ENCODE measurements at regions of chr7 and their contacts with region 1.

Region 1: GRCh38 chr7:21427182-21427870 is 557 bp upstream of the SP4 start:
- DNase-seq: peak; percentile 98 to 100 (median 99)
- ATAC-seq: peak; percentile 85
- H3K4me3 ChIP-seq: peak overlapping the region; percentile 99
- H3K4me3 Mint-ChIP-seq: peak overlapping the region; percentile 94 to 99 (median 98)
- H3K27ac ChIP-seq: peak overlapping the region; percentile 99
- H3K27ac Mint-ChIP-seq: peak overlapping the region; percentile 94 to 100 (median 99)
- H3K4me1 ChIP-seq: peaks cover 37 to 41% of the 10 kb centered on the region in 2 donors
- H3K4me1 Mint-ChIP-seq: peaks cover 24 to 52% (median 52%) of the 10 kb centered on the region in 7 donors
- H3K27me3 ChIP-seq: no peaks in the 10 kb centered on the region
- H3K27me3 Mint-ChIP-seq: no peaks in the 10 kb centered on the region

Region 2: GRCh38 chr7:21338728-21339164 is 88.6 kb before region 1 on chr7:
- CTCF ChIA-PET with region 1: no interaction called
- POLR2A ChIA-PET with region 1: interaction called, 6 read pairs
- intact Hi-C with region 1: loop called (anchors 1 to 5 kb)
- DNase-seq: peak in 5 of 9 donors; percentile 4 to 58 (median 10)
- ATAC-seq: peak; percentile 95
- H3K4me3 ChIP-seq: peak overlapping the region; percentile 33
- H3K4me3 Mint-ChIP-seq: peak overlapping the region; percentile 9 to 72 (median 50)
- H3K27ac ChIP-seq: peak overlapping the region; percentile 32
- H3K27ac Mint-ChIP-seq: peak overlapping the region; percentile 30 to 95 (median 75)
- H3K4me1 ChIP-seq: peaks cover 7 to 15% of the 10 kb centered on the region in 2 donors
- H3K4me1 Mint-ChIP-seq: peaks cover 7 to 70% (median 13%) of the 10 kb centered on the region in 7 donors
- H3K27me3 ChIP-seq: no peaks in the 10 kb centered on the region
- H3K27me3 Mint-ChIP-seq: no peaks in the 10 kb centered on the region

Region 3: DNA sequence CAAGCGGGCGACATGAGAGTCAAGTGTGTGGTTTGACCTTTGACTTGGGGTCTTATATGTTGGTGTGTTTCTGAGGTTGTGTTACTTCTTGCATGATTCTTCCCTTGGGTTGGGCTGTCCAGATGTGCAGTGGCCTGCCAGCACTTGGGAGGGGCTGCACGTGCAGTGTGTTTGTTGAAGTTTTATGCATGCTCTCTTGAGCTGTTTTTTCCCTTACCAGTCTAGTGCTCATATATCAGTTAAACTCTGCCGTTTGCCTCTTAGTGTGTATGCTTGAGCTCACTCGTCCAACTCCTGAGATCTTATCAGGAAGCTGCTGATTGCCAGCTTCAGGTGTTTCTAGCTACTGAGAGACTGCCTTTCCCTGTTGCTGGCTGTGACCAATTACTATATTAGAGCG is 23.6 kb after region 1 on chr7:
- CTCF ChIA-PET with region 1: no interaction called
- POLR2A ChIA-PET with region 1: interaction called, 4 read pairs
- intact Hi-C with region 1: loop called in 1 of 2 experiments (anchors 2 kb)
- DNase-seq: no peak
- ATAC-seq: no peak
- H3K4me3 ChIP-seq: no peak overlapping the region
- H3K4me3 Mint-ChIP-seq: peak overlapping the region in 3 of 10 donors; percentile 13 to 22 (median 20)
- H3K27ac ChIP-seq: no peak overlapping the region
- H3K27ac Mint-ChIP-seq: peak overlapping the region in 4 of 9 donors; percentile 16 to 64 (median 26)
- H3K4me1 ChIP-seq: peaks cover 0 to 6% of the 10 kb centered on the region in 2 donors
- H3K4me1 Mint-ChIP-seq: peaks cover 21 to 58% (median 50%) of the 10 kb centered on the region in 7 donors
- H3K27me3 ChIP-seq: no peaks in the 10 kb centered on the region
- H3K27me3 Mint-ChIP-seq: no peaks in the 10 kb centered on the region

Region 4: GRCh38 chr7:21722371-21722770 is 295.0 kb after region 1 on chr7:
- CTCF ChIA-PET with region 1: no interaction called
- POLR2A ChIA-PET with region 1: no interaction called
- intact Hi-C with region 1: no loop called
- DNase-seq: no peak
- ATAC-seq: no peak
- H3K4me3 ChIP-seq: no peak overlapping the region
- H3K4me3 Mint-ChIP-seq: no peak overlapping the region
- H3K27ac ChIP-seq: no peak overlapping the region
- H3K27ac Mint-ChIP-seq: no peak overlapping the region
- H3K4me1 ChIP-seq: no peaks in the 10 kb centered on the region
- H3K4me1 Mint-ChIP-seq: peaks cover 0 to 2% (median 0%) of the 10 kb centered on the region in 7 donors
- H3K27me3 ChIP-seq: no peaks in the 10 kb centered on the region
- H3K27me3 Mint-ChIP-seq: no peaks in the 10 kb centered on the region

Region 5: DNA sequence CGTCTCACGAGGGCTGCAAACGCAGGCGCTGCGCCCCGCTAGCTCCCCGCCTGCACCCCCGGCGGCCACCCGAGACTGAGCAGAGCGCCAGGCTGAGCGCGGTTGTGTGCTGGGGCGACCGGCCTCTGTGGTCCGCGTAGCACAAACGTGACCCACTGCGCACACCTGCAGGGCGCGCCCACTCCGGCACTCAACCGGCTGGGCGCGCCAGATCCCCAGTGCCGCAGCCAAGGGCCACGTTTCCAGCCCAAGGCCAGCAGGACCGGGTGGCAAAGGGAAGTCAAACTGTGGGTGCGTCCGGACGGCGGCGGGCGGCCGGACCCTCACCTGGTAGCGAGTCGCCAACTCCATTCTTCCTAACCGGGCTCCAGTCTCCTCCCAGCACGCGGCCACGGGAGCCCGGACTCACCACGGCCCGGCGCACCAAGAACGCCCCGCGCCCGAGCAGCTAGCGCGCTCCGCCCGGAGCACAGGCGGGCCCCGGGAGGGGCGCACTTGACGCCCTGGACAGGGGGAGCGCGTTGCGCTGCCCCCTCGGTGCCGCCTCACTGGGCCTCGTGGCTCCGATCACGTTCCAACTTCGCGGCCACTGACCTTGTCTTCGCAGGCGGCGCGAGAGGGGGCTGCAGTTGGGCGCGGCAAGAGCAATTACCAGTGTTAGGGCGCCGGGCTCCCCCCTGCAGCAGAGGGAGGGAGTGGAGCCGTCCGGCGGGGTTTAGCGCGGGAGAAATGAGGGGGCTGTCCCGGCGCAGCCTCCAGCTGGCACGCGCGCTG is 518.3 kb after region 1 on chr7 and contains the start of gene CDCA7L:
- CTCF ChIA-PET with region 1: no interaction called
- POLR2A ChIA-PET with region 1: interaction called, 5 read pairs
- intact Hi-C with region 1: loop called (anchors 1 kb)
- DNase-seq: peak; percentile 40 to 77 (median 66)
- ATAC-seq: peak; percentile 85
- H3K4me3 ChIP-seq: peak within 1 kb of the TSS; percentile 57
- H3K4me3 Mint-ChIP-seq: peak within 1 kb of the TSS; percentile 86 to 95 (median 92)
- H3K27ac ChIP-seq: peak within 1 kb of the TSS; percentile 56
- H3K27ac Mint-ChIP-seq: peak within 1 kb of the TSS; percentile 60 to 87 (median 75)
- H3K4me1 ChIP-seq: peaks cover 0 to 33% of the 10 kb centered on the region in 2 donors
- H3K4me1 Mint-ChIP-seq: peaks cover 29 to 80% (median 62%) of the 10 kb centered on the region in 7 donors
- H3K27me3 ChIP-seq: no peaks in the 10 kb centered on the region
- H3K27me3 Mint-ChIP-seq: peaks cover 0 to 20% (median 0%) of the 10 kb centered on the region in 5 donors
- total RNA-seq, gene CDCA7L: 24.3 to 47.0 (median 41.0) TPM

Region 6: DNA sequence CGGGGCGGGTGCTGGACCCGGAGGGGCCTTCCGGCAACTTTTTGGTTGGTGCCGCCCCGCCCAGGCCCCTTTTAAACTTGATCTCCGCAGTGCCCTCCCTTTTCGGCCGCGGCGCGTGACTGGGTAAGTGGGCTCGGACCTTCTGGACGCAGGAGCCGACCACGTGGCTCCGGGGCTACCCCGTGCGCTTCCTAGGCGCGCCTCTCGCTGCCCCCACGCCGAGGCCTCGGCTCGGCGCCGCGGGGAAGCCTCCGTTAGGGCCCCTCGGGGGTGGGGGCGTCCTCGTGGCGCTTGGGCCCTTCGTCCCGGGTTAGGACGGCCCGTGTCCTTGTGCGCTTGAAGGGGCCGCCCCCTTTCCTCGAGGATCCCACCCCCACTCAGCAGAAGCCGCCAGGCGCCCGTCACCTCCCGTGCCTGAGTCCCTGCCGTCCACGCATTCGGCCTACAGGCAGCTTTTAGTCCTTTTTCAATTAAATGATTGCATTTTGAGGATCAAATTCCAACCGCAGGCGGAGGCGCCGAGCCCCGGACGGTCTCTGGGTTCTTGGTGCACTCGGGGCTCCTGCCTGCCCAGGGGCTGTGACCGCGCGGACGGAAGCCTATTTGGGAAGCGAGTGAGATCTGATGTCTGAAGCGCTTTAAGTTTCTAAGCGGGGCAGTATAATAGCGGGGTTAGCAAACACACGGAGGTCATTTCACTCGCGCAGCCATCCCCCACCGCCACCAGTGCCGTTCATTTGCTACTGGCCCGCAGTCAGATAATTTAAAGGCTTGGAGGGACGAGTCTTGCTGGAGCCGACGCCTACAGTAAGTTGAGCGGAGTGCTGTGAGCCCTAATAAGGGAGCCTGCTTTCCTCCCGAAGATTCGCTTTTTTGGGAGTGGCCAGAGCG is 1427.1 kb after region 1 on chr7:
- CTCF ChIA-PET with region 1: no interaction called
- POLR2A ChIA-PET with region 1: no interaction called
- intact Hi-C with region 1: loop called (anchors 1 to 2 kb)
- DNase-seq: peak in 8 of 9 donors; percentile 9 to 87 (median 70)
- ATAC-seq: peak; percentile 39
- H3K4me3 ChIP-seq: peak overlapping the region; percentile 88
- H3K4me3 Mint-ChIP-seq: peak overlapping the region; percentile 90 to 97 (median 94)
- H3K27ac ChIP-seq: peak overlapping the region; percentile 93
- H3K27ac Mint-ChIP-seq: peak overlapping the region; percentile 85 to 97 (median 92)
- H3K4me1 ChIP-seq: peaks cover 0 to 4% of the 10 kb centered on the region in 2 donors
- H3K4me1 Mint-ChIP-seq: peaks cover 11 to 37% (median 16%) of the 10 kb centered on the region in 7 donors
- H3K27me3 ChIP-seq: no peaks in the 10 kb centered on the region
- H3K27me3 Mint-ChIP-seq: peaks cover 0 to 5% (median 0%) of the 10 kb centered on the region in 5 donors

Region 7: DNA sequence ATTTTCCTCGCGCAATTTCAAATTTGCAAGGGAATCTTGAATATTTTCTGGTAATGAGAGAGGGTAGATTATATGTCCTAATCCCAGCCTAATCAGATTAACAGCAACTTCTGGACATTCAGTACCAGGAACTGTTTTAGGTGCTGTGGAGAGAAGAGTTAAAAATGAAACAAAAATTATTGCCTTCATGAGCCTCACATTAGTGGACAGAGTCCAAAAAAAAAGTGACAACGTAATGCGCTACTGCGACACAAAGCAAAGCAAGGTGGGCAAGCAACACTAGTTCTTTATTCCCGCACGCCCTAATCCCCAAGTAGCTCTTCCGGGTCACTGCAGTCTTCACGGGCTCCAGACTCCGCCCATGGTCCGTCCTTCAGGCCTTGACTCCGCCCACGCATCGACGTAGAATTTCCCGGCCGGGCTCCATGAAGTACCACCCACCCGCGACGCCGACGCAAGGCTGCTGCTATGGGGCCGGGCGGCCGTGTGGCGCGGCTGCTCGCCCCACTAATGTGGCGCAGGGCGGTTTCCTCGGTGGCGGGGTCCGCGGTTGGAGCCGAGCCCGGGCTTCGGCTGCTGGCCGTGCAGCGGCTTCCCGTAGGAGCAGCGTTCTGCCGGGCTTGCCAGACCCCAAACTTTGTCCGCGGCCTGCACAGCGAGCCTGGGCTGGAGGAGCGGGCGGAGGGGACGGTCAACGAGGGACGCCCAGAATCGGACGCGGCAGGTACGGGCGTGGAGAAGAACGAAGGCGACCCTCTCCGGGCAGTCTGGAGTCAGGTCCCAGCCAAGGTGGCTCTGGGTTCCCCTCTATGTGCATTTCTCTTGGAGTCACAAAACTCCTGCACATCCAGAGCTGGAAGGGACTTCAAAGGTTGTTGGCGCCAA is 1871.8 kb after region 1 on chr7 and contains the start of gene MALSU1:
- CTCF ChIA-PET with region 1: no interaction called
- POLR2A ChIA-PET with region 1: no interaction called
- intact Hi-C with region 1: loop called in 1 of 2 experiments (anchors 2 kb)
- DNase-seq: peak; percentile 90 to 96 (median 94)
- ATAC-seq: peak; percentile 100
- H3K4me3 ChIP-seq: peak within 1 kb of the TSS; percentile 96
- H3K4me3 Mint-ChIP-seq: peak within 1 kb of the TSS; percentile 90 to 97 (median 94)
- H3K27ac ChIP-seq: peak within 1 kb of the TSS; percentile 92
- H3K27ac Mint-ChIP-seq: peak within 1 kb of the TSS; percentile 96 to 100 (median 98)
- H3K4me1 ChIP-seq: peaks cover 14 to 23% of the 10 kb centered on the region in 2 donors
- H3K4me1 Mint-ChIP-seq: peaks cover 34 to 55% (median 48%) of the 10 kb centered on the region in 7 donors
- H3K27me3 ChIP-seq: no peaks in the 10 kb centered on the region
- H3K27me3 Mint-ChIP-seq: peaks cover 0 to 10% (median 0%) of the 10 kb centered on the region in 5 donors
- total RNA-seq, gene MALSU1: 32.7 to 48.3 (median 44.8) TPM

Measured in naive thymus-derived CD4-positive, alpha-beta T cell (primary cell).